MCF 10A (cell line): ENCODE measurements at regions of chr3 and their contacts with region 1.

Region 1: DNA sequence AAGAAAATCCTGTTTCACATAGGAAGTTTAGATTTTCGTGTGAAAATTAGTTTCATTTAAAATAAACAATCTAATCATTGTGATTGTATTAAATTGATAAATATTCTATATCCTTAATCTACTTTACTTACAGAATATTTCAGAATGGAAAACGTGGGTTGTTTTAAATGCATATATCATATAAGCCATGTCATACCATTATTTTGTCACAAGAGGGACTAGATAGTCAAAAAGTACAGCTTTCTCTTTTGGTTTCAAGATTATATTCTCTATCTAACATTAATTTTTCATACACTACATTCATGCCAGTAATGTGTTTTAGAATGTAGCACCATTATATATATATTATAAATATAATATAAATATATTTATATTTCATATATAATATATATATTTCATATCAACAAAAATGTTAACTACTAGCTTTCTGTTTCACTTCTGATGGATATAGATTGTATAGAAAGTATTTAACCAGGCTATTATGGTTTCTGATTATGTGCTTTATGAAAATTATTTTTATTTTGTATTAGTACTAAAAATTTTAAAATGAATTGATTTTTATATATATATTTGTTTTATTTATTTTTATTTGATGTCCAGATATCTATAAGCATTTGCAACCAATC is 45.3 kb downstream of the OSTN start:
- DNase-seq: peak; percentile 30
- H3K4me3 Mint-ChIP-seq: no peak overlapping the region
- H3K27ac Mint-ChIP-seq: no peak overlapping the region
- H3K4me1 Mint-ChIP-seq: peaks cover 6% of the 10 kb centered on the region
- H3K27me3 Mint-ChIP-seq: no peaks in the 10 kb centered on the region
- CTCF ChIP-seq: no peak

Region 2: DNA sequence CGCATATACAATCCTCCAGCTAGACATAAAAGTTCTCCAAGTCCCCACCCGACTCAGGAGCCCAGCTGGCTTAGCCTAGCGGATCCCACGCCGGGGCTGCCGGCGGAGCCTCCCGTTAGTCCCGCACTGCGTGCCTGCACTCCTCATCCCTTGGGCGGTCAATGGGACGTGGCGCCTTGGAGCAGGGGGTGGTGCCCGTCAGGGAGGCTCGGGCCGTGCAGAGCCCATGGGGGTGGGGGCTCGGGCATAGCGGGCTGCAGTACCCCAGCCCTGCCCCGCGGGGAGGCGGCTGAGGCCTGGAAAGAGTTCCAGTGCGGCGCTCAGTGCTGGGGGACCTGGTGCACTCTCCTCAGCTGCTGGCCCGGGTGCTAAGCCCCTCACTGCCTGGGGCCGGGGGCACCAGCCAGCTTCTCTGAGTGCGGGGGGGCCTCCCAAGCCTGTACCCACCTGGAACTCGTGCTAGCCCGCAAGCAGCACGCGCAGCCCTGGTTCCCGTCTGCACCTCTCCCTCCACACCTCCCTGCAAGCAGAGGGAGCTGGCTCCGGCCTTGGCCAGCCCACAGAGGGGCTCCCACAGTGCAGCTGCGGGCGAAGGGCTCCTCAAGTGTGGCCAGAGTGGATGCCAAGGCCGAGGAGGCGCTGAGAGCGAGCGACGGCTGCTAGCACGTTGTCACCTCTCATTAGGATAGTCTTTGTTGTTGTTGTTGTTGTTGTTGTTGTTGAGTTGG is 72.7 kb after region 1 on chr3:
- CTCF ChIA-PET with region 1: no interaction called
- POLR2A ChIA-PET with region 1: no interaction called
- intact Hi-C with region 1: no loop called
- DNase-seq: no peak
- H3K4me3 Mint-ChIP-seq: no peak overlapping the region
- H3K27ac Mint-ChIP-seq: no peak overlapping the region
- H3K4me1 Mint-ChIP-seq: peaks cover 13% of the 10 kb centered on the region
- H3K27me3 Mint-ChIP-seq: no peaks in the 10 kb centered on the region
- CTCF ChIP-seq: no peak

Region 3: GRCh38 chr3:191388823-191389222 is 144.5 kb after region 1 on chr3:
- CTCF ChIA-PET with region 1: interaction called, 6 read pairs
- POLR2A ChIA-PET with region 1: no interaction called
- intact Hi-C with region 1: loop called (anchors 2 kb)
- DNase-seq: no peak
- H3K4me3 Mint-ChIP-seq: no peak overlapping the region
- H3K27ac Mint-ChIP-seq: peak overlapping the region; percentile 85
- H3K4me1 Mint-ChIP-seq: no peaks in the 10 kb centered on the region
- H3K27me3 Mint-ChIP-seq: no peaks in the 10 kb centered on the region
- CTCF ChIP-seq: peak; percentile 36